Tibial artery (tissue), 4 donors: ENCODE measurements at regions of chr17 and their contacts with region 1.

Region 1: DNA sequence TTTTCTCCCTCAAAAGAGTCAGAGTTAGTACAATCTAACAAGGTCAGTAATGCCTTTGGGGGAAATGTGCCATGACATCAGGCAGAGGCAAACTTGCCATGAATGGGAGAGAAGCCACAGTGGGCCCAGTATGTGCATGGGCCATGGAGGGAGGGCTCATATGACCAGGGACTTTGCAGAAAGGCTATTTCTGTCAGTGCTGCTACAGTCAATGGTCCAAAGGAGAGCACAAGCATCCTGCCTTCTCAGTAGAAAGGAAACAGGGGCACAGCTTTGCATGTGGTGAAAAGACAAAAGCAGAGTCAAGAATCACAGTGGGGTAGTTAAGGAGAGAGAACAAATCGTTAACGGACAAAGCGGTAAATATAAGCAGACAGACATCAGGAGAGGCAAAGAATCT is 11.2 kb upstream of the CORO6 start:
- DNase-seq: no peak
- H3K4me3 ChIP-seq: no peak overlapping the region
- H3K27ac ChIP-seq: no peak overlapping the region
- H3K4me1 ChIP-seq: peaks cover 0 to 5% (median 2%) of the 10 kb centered on the region in 4 donors
- H3K27me3 ChIP-seq: no peaks in the 10 kb centered on the region
- CTCF ChIP-seq: no peak

Region 2: DNA sequence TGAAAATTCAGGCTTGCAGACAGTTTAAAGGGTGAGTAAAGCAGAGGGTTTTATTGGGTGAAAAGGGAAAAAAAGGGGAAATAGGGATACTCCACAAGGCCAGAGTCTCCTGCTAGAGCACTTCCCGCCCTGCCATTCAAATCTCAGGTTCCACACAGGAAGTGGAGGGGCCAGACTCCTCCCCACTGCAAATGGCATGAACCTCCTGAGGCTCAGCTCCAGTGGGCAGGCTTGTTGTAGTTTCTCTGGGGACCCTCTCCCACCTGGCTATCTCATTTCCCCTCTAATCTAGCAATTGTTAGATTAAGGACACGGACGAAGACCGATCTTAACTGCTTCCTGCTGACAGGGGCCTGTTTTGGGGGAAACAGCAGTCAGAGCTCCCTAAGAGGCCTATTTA is 200.3 kb before region 1 on chr17:
- intact Hi-C with region 1: no loop called
- DNase-seq: no peak
- H3K4me3 ChIP-seq: no peak overlapping the region
- H3K27ac ChIP-seq: no peak overlapping the region
- H3K4me1 ChIP-seq: peaks cover 0 to 18% (median 1%) of the 10 kb centered on the region in 4 donors
- H3K27me3 ChIP-seq: no peaks in the 10 kb centered on the region
- CTCF ChIP-seq: no peak

Region 3: DNA sequence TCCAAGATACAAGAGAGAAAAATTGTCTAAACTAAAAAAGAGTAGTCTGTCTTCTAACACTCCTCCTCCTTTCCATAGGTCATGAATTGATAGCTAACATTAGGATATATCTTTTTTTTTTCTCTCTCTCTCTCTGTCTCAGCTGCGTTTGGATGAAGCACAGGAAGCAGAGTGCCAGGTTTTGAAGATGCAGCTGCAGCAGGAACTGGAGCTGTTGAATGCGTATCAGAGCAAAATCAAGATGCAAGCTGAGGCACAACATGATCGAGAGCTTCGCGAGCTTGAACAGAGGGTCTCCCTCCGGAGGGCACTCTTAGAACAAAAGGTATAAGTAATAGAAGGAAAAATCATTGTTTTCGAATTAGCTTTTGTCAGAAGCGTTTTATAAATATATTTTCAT is 99.9 kb before region 1 on chr17:
- intact Hi-C with region 1: no loop called
- DNase-seq: no peak
- H3K4me3 ChIP-seq: no peak overlapping the region
- H3K27ac ChIP-seq: no peak overlapping the region
- H3K4me1 ChIP-seq: no peaks in the 10 kb centered on the region
- H3K27me3 ChIP-seq: no peaks in the 10 kb centered on the region
- CTCF ChIP-seq: no peak

Region 4: DNA sequence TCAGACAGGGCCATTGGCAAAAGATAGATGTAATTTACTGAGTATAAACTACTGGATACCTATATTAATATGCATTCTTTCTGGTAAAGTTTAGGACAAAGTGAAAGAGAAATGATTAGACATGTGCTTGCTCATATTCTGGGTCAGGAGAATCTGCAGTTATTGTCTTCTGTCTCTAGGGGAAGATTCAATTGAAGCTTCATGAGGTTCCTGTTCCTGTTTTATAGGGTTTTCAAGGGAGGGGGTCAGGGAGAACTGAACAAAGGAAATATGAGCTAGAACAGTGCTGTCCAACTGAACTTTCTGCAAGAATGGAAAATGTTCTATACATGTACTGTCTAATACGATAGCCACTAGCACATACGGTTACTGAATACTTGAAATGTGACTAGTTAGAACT is 48.2 kb after region 1 on chr17:
- intact Hi-C with region 1: loop called (anchors 2 kb)
- DNase-seq: no peak
- H3K4me3 ChIP-seq: no peak overlapping the region
- H3K27ac ChIP-seq: no peak overlapping the region
- H3K4me1 ChIP-seq: peaks cover 0 to 25% (median 13%) of the 10 kb centered on the region in 4 donors
- H3K27me3 ChIP-seq: no peaks in the 10 kb centered on the region
- CTCF ChIP-seq: no peak